CD8-positive, alpha-beta T cell (primary cell): ENCODE measurements at regions of chr12 and their contacts with region 1.

Region 1: DNA sequence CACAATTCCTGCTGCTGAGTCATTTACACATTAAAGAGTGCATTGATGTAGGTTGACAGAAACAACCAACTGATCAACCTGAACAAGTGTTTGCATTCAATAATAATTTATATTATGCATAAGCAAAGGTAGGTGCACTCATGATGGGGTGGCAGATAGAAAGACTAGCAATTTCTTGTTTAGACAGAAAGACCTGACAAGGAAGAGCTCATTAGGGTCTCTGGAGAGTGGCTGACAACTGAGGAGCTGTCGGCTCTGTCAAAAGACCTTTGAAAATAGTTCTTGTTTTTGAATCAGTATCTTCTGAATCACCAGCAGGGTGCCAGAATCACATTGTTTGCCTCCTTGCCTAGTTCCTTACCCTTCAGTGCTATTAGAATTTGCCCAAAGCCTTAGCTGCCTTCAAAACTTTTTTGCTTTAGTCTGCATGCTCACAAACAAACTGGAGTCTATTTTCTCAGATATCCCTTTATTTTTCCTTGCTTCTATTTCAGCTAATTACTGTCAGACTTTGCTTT is 234.7 kb downstream of the BTG1 start:
- DNase-seq: peak in 2 of 9 experiments; percentile 20 to 28
- ATAC-seq: no peak
- H3K4me3 ChIP-seq: no peak overlapping the region
- H3K4me3 Mint-ChIP-seq: no peak overlapping the region
- H3K27ac ChIP-seq: no peak overlapping the region
- H3K27ac Mint-ChIP-seq: no peak overlapping the region
- H3K4me1 ChIP-seq: no peaks in the 10 kb centered on the region
- H3K4me1 Mint-ChIP-seq: peaks cover 21% of the 10 kb centered on the region
- H3K27me3 ChIP-seq: no peaks in the 10 kb centered on the region
- H3K27me3 Mint-ChIP-seq: no peaks in the 10 kb centered on the region
- CTCF ChIP-seq: no peak

Region 2: DNA sequence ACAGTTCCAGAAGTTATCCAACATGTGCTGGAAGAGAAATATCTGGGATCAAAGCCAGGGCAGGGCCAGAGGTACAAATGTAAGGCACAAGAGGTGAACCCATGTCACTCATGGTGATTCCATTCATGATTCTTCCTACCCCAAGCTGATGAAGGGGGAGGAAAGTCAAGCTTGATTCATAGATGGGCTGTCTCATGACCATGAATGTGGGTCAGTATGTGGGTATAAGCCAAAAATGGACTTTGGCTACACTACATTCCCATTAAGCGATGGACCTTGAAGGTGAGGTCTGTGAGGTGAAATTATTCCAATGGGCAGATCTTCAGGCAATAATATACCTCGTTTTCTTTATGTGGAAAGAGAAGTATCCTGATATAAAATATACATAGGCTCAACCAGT is 17.6 kb after region 1 on chr12:
- CTCF ChIA-PET with region 1: no interaction called
- POLR2A ChIA-PET with region 1: no interaction called
- intact Hi-C with region 1: loop called in 1 of 2 experiments (anchors 2 kb)
- DNase-seq: no peak
- ATAC-seq: no peak
- H3K4me3 ChIP-seq: no peak overlapping the region
- H3K4me3 Mint-ChIP-seq: no peak overlapping the region
- H3K27ac ChIP-seq: no peak overlapping the region
- H3K27ac Mint-ChIP-seq: no peak overlapping the region
- H3K4me1 ChIP-seq: no peaks in the 10 kb centered on the region
- H3K4me1 Mint-ChIP-seq: peaks cover 8% of the 10 kb centered on the region
- H3K27me3 ChIP-seq: no peaks in the 10 kb centered on the region
- H3K27me3 Mint-ChIP-seq: no peaks in the 10 kb centered on the region
- CTCF ChIP-seq: no peak

Region 3: DNA sequence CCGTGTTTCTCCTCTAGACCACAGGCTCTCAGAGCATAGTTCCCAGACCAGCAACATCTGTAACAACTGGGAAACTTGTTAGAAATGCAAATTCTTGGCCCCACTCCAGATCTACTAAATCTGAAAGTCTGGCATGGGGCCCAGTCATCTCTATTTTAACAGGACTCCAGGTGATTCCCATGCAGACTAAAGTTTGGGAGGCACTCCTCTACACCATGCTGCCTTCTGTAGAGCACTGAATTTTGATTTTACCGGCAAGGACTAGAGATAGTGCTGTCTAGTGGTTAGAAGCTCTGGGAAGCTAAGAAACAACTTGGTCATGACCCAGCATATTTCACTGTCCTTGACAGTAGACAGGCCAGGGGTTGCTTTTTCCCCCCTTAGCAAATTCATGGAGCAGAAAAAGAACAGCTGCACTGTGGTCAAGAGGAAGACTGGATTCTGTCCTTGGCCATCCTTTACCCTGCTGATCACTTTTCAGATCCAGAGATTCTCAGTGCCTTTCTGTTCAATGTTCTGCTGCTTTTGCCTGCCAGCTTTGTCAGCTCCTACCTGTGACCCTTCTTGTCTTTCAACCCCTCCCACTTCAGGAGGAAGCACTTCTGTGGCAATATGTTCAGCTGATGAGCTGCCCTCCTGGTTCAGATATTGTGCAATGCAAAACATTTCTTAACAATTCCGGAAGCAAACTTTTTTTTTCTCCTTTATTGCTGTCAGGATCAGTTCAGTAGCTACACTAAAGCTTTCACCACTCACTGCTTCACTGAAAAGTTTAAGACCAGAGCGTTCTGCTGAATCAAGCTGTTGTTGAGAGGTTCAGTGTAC is 1333.0 kb after region 1 on chr12:
- CTCF ChIA-PET with region 1: no interaction called
- POLR2A ChIA-PET with region 1: no interaction called
- intact Hi-C with region 1: loop called in 1 of 2 experiments (anchors 10 kb)
- DNase-seq: peak in 2 of 9 experiments; percentile 21 to 49
- ATAC-seq: no peak
- H3K4me3 ChIP-seq: no peak overlapping the region
- H3K4me3 Mint-ChIP-seq: peak overlapping the region; percentile 51
- H3K27ac ChIP-seq: peak overlapping the region in 1 of 2 experiments; percentile 5
- H3K27ac Mint-ChIP-seq: peak overlapping the region; percentile 89
- H3K4me1 ChIP-seq: peaks cover 31% of the 10 kb centered on the region
- H3K4me1 Mint-ChIP-seq: peaks cover 47% of the 10 kb centered on the region
- H3K27me3 ChIP-seq: no peaks in the 10 kb centered on the region
- H3K27me3 Mint-ChIP-seq: no peaks in the 10 kb centered on the region
- CTCF ChIP-seq: no peak